MCF 10A (cell line): ENCODE measurements at regions of chr5 and their contacts with region 1.

Region 1: GRCh38 chr5:43616535-43616934 is 13.6 kb downstream of the NNT start:
- DNase-seq: peak; percentile 55
- H3K4me3 Mint-ChIP-seq: no peak overlapping the region
- H3K27ac Mint-ChIP-seq: no peak overlapping the region
- H3K4me1 Mint-ChIP-seq: peaks cover 14% of the 10 kb centered on the region
- H3K27me3 Mint-ChIP-seq: no peaks in the 10 kb centered on the region
- CTCF ChIP-seq: no peak

Region 2: DNA sequence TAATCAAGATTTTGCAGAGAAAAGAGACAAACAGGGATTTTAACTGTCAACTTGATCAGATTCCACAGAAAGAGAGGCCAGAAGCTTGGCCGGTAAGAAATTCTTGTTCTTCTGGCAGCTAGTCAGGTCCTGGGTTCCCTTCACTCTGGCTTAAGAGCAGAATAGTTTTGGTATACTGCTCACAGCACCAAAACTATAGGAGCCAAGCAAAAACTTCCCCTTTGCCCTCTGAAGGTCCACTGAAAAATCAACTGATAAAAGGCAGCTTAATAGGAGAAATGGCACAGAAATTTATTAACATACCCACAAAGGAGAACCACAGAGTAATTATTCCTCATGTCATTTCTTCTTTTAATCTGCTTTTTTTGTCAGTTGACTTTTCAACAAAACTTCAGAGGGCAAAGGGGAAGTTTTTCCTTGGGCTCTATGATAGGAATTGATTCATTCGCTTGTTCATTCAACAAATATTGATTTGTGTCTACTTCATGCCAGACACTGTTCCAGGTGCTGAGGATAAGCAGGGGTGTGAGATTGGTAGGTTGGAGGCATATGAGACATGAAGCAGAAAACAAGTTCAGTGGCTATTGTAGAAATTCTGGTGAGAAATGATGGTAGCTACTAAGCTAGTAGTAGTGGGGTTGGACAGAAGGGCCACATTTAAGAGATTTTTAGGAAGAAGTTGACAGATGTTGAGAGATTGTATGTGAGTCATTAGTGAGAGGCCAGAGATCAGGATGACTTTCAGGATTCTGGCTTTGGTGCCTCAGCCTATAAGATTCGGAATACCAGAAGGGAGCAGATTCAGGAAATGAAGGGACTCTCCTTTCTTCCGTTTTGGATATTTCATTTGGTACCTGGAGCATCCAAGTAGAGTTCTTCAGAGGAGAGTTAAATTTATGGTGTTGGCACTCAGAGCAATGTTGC is 34.2 kb before region 1 on chr5:
- CTCF ChIA-PET with region 1: no interaction called
- POLR2A ChIA-PET with region 1: no interaction called
- intact Hi-C with region 1: no loop called
- DNase-seq: no peak
- H3K4me3 Mint-ChIP-seq: no peak overlapping the region
- H3K27ac Mint-ChIP-seq: no peak overlapping the region
- H3K4me1 Mint-ChIP-seq: no peaks in the 10 kb centered on the region
- H3K27me3 Mint-ChIP-seq: no peaks in the 10 kb centered on the region
- CTCF ChIP-seq: no peak

Region 3: GRCh38 chr5:43602461-43603343 is 13.8 kb before region 1 on chr5 and contains the start of gene NNT:
- CTCF ChIA-PET with region 1: interaction called, 4 read pairs
- POLR2A ChIA-PET with region 1: interaction called, 19 read pairs
- intact Hi-C with region 1: no loop called
- DNase-seq: peak; percentile 60
- H3K4me3 Mint-ChIP-seq: peak within 1 kb of the TSS; percentile 83
- H3K27ac Mint-ChIP-seq: peak within 1 kb of the TSS; percentile 99
- H3K4me1 Mint-ChIP-seq: peaks cover 11% of the 10 kb centered on the region
- H3K27me3 Mint-ChIP-seq: no peaks in the 10 kb centered on the region
- CTCF ChIP-seq: no peak
- total RNA-seq, gene NNT: 38.4 and 52.3 TPM in 2 replicates

Region 4: GRCh38 chr5:45274241-45274640 is 1657.7 kb after region 1 on chr5:
- CTCF ChIA-PET with region 1: no interaction called
- POLR2A ChIA-PET with region 1: no interaction called
- intact Hi-C with region 1: no loop called
- DNase-seq: no peak
- H3K4me3 Mint-ChIP-seq: no peak overlapping the region
- H3K27ac Mint-ChIP-seq: no peak overlapping the region
- H3K4me1 Mint-ChIP-seq: peaks cover 6% of the 10 kb centered on the region
- H3K27me3 Mint-ChIP-seq: no peaks in the 10 kb centered on the region
- CTCF ChIP-seq: no peak